ENCODE measurements at regions of chr10 and their contacts with region 1.

Region 1: GRCh38 chr10:86376852-86377796 is 10.5 kb upstream of the GRID1 start:
- DNase-seq: peak; percentile 76 to 95
- ATAC-seq: peak; percentile 93
- H3K4me3 ChIP-seq: no peak overlapping the region
- H3K27ac ChIP-seq: no peak overlapping the region
- H3K4me1 ChIP-seq: no peaks in the 10 kb centered on the region
- H3K27me3 ChIP-seq: no peaks in the 10 kb centered on the region

Region 2: GRCh38 chr10:85067955-85068354 is 1309.2 kb before region 1 on chr10:
- intact Hi-C with region 1: loop called in 1 of 2 experiments (anchors 10 kb)
- DNase-seq: no peak
- ATAC-seq: no peak
- H3K4me3 ChIP-seq: no peak overlapping the region
- H3K27ac ChIP-seq: no peak overlapping the region
- H3K4me1 ChIP-seq: no peaks in the 10 kb centered on the region
- H3K27me3 ChIP-seq: no peaks in the 10 kb centered on the region

Region 3: GRCh38 chr10:85548034-85548433 is 829.1 kb before region 1 on chr10:
- intact Hi-C with region 1: loop called (anchors 5 to 10 kb)
- DNase-seq: no peak
- ATAC-seq: peak; percentile 29
- H3K4me3 ChIP-seq: no peak overlapping the region
- H3K27ac ChIP-seq: no peak overlapping the region
- H3K4me1 ChIP-seq: no peaks in the 10 kb centered on the region
- H3K27me3 ChIP-seq: no peaks in the 10 kb centered on the region

Region 4: GRCh38 chr10:86269332-86269731 is 107.8 kb before region 1 on chr10:
- intact Hi-C with region 1: no loop called
- DNase-seq: no peak
- ATAC-seq: no peak
- H3K4me3 ChIP-seq: no peak overlapping the region
- H3K27ac ChIP-seq: no peak overlapping the region
- H3K4me1 ChIP-seq: no peaks in the 10 kb centered on the region
- H3K27me3 ChIP-seq: no peaks in the 10 kb centered on the region

Region 5: DNA sequence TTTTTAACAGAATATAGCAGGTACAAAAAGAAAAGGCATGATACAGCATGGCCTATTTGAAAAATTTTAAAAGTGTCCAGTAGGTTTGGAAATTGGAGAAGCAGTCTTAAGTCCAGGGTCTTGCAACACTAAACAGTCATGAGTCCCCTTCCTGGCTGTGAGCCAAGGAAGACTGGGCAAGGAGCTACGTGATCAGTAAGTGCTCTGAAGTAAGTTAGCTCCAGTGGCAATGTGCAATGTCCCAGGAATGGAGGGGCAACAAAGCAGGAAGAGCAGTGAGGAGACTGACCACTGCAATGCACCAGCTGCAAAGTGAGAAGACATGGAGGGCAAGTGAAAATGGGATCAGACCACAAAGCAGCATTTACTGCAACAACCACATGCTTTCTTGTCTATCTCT is 62.4 kb after region 1 on chr10:
- intact Hi-C with region 1: no loop called
- DNase-seq: peak in 1 of 2 donors; percentile 90
- ATAC-seq: peak; percentile 44
- H3K4me3 ChIP-seq: no peak overlapping the region
- H3K27ac ChIP-seq: no peak overlapping the region
- H3K4me1 ChIP-seq: no peaks in the 10 kb centered on the region
- H3K27me3 ChIP-seq: no peaks in the 10 kb centered on the region